Colonic mucosa (tissue), 4 donors: ENCODE measurements at regions of chr3 and their contacts with region 1.

Region 1: DNA sequence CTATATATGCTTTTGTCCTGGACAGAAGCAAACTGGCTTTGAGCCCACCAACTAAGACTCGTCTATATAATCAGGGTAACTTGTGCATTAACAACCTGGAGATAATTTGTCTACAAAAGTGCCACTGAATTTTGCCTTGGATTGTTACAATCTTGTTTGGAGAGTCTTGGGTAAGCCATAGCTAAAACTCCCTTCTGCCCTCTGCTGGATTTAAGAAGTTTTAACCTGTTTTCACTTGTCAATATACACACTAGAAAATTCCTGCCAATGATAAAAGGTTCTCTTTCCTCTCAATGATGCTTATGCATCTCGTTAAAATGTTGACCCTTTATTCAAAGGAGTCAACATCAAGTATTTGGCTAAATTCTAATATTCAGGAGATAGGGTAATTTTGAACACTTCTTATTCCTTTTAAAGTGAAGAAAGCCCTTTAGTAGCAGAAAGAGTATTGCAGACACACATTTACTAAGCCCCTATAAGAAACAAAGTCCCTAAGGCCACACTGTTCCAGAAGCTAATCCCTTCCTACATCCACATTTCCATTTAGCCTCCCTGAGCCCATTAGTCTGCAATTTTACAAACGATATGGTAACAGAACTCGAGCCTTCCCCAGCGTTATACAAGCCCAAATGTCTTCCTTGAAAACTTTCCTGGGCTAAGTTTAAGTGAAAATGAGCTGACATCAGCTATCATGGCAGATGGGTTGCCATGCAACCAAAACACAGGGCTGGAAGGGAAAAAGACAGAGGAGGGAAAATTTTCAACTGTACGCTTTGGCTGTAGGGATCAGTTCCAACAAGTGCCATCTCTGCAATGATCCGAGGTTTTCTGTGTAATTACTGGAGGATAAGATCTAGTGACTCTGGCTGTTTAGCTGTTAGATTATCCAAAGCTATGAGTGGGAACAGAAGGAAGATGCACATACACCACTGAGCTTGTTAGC is 75.9 kb upstream of the FGF12 start:
- DNase-seq: no peak
- H3K4me3 ChIP-seq: no peak overlapping the region
- H3K27ac ChIP-seq: no peak overlapping the region
- H3K4me1 ChIP-seq: no peaks in the 10 kb centered on the region
- H3K27me3 ChIP-seq: no peaks in the 10 kb centered on the region
- CTCF ChIP-seq: peak; percentile 42

Region 2: GRCh38 chr3:192467230-192468140 is 335.7 kb before region 1 on chr3:
- intact Hi-C with region 1: loop called (anchors 5 kb)
- DNase-seq: peak; percentile 45
- H3K4me3 ChIP-seq: no peak overlapping the region
- H3K27ac ChIP-seq: no peak overlapping the region
- H3K4me1 ChIP-seq: no peaks in the 10 kb centered on the region
- H3K27me3 ChIP-seq: no peaks in the 10 kb centered on the region
- CTCF ChIP-seq: peak; percentile 91

Region 3: DNA sequence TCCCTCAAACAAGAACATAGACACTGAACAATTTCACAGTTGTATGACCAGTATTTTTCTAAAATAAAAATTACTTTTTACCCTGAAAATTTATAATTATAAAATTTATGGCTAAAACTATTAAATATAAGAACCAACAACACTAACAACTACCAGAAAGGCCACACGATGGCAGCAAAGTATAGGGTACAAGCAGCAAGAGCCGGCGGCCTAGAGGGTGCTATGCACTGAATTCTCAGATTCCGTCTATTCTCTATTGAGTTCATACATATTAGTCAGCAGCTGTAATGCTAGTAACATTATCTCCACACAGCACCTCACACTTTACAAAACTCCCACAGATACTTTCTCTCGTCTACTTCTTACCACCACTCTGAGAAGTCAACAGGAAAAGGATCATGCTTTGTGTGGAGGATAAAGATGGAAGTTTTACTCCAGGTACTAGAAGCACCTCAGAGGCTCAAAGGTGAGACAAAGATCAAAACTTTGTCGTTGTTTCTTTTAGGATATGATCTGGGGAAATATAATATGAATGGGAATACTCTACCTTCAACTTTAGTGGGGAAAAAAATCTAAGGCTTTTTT is 236.4 kb before region 1 on chr3:
- intact Hi-C with region 1: loop called (anchors 2 kb)
- DNase-seq: peak; percentile 61
- H3K4me3 ChIP-seq: no peak overlapping the region
- H3K27ac ChIP-seq: no peak overlapping the region
- H3K4me1 ChIP-seq: no peaks in the 10 kb centered on the region
- H3K27me3 ChIP-seq: no peaks in the 10 kb centered on the region
- CTCF ChIP-seq: peak; percentile 44

Region 4: DNA sequence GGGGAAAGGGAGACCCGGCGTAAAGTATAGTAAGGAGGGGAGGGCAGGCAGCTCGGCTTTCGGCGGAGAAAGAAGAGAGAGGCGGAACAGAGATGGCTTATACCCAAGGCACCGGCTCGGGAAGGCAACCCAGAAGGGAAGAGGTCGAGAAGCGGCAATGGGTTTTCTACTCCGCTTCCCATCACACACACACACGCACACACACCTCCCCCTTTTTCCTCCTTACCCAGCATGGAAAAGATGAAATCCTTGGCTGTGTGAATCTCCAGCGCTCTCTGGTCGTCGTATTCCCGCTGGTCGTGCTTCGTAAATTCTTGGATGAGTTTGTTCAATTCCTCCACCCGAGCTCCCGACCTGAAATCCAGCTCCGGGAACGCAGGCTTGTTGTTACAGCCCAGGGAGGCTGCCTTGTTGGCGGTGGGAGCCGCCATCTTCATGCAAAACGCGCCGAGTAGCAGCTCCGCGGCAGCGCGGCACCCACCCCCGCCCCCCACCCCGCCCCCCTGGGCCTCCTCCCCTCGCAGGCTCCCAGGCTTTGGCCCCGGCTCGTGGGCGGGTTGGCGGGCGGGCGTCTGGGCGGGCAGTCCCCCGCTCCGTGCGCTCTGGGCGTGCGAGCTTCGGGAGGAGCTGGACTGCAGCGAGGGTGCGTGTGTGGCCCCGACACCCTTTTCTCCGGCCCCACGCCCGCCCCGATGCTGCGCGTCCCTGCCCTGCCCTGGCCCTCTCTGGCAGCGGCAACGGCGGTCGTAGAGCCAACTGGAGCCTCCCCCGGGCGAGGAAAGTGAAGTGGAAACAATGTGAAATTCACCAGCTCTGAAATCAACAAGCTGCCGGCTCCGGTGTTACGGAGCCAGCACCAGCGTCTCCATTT is 114.4 kb after region 1 on chr3 and contains the start of gene MB21D2:
- intact Hi-C with region 1: no loop called
- DNase-seq: peak; percentile 76
- H3K4me3 ChIP-seq: peak within 1 kb of the TSS; percentile 61
- H3K27ac ChIP-seq: peak within 1 kb of the TSS; percentile 87
- H3K4me1 ChIP-seq: no peaks in the 10 kb centered on the region
- H3K27me3 ChIP-seq: no peaks in the 10 kb centered on the region
- CTCF ChIP-seq: no peak
- total RNA-seq, gene MB21D2: 2.8 to 4.4 TPM